SK-N-SH (cell line): ENCODE measurements at regions of chrX and their contacts with region 1.

Region 1: GRCh38 chrX:17046478-17047097 is 100.1 kb downstream of the REPS2 start:
- DNase-seq: peak; percentile 51
- H3K4me3 ChIP-seq: peak overlapping the region in 1 of 2 experiments; percentile 29; a peak in 1 of 4 replicates
- H3K27ac ChIP-seq: no peak overlapping the region
- H3K4me1 ChIP-seq: no peaks in the 10 kb centered on the region; a peak in 1 of 4 replicates
- H3K27me3 ChIP-seq: no peaks in the 10 kb centered on the region; the same call in 1 of the 2 replicates
- CTCF ChIP-seq: peak; percentile 90
- EP300 ChIP-seq: no peak
- RAD21 ChIP-seq: peak; percentile 86

Region 2: GRCh38 chrX:16100673-16101072 is 945.9 kb before region 1 on chrX:
- CTCF ChIA-PET with region 1: no interaction called
- POLR2A ChIA-PET with region 1: no interaction called
- DNase-seq: peak; percentile 31
- H3K4me3 ChIP-seq: no peak overlapping the region
- H3K27ac ChIP-seq: no peak overlapping the region
- H3K4me1 ChIP-seq: peaks cover 0 to 2% of the 10 kb centered on the region in 2 experiments; a peak in 1 of 4 replicates
- H3K27me3 ChIP-seq: no peaks in the 10 kb centered on the region; the same call in 1 of the 2 replicates
- CTCF ChIP-seq: no peak
- EP300 ChIP-seq: peak in 1 of 2 experiments; percentile 72; a peak in 2 of 4 replicates
- RAD21 ChIP-seq: peak; percentile 9; the same call in 1 of the 2 replicates

Region 3: GRCh38 chrX:16826207-16826606 is 220.4 kb before region 1 on chrX:
- CTCF ChIA-PET with region 1: interaction called, 74 read pairs
- POLR2A ChIA-PET with region 1: no interaction called
- DNase-seq: peak; percentile 44
- H3K4me3 ChIP-seq: no peak overlapping the region
- H3K27ac ChIP-seq: peak overlapping the region; percentile 75 to 81
- H3K4me1 ChIP-seq: peaks cover 11 to 23% of the 10 kb centered on the region in 2 experiments; a peak in 2 of 4 replicates
- H3K27me3 ChIP-seq: no peaks in the 10 kb centered on the region
- CTCF ChIP-seq: peak; percentile 77
- EP300 ChIP-seq: peak in 1 of 2 experiments; percentile 41; a peak in 2 of 4 replicates
- RAD21 ChIP-seq: peak; percentile 87

Region 4: GRCh38 chrX:17007206-17007683 is 39.3 kb before region 1 on chrX:
- CTCF ChIA-PET with region 1: interaction called, 12 read pairs
- POLR2A ChIA-PET with region 1: no interaction called
- DNase-seq: peak; percentile 36
- H3K4me3 ChIP-seq: no peak overlapping the region
- H3K27ac ChIP-seq: no peak overlapping the region
- H3K4me1 ChIP-seq: no peaks in the 10 kb centered on the region
- H3K27me3 ChIP-seq: no peaks in the 10 kb centered on the region; the same call in 1 of the 2 replicates
- CTCF ChIP-seq: peak; percentile 53
- EP300 ChIP-seq: no peak
- RAD21 ChIP-seq: peak; percentile 44

Region 5: GRCh38 chrX:17056868-17057608 is 10.4 kb after region 1 on chrX:
- CTCF ChIA-PET with region 1: interaction called, 13 read pairs
- POLR2A ChIA-PET with region 1: no interaction called
- DNase-seq: no peak
- H3K4me3 ChIP-seq: no peak overlapping the region
- H3K27ac ChIP-seq: no peak overlapping the region
- H3K4me1 ChIP-seq: no peaks in the 10 kb centered on the region
- H3K27me3 ChIP-seq: no peaks in the 10 kb centered on the region
- CTCF ChIP-seq: no peak
- EP300 ChIP-seq: no peak
- RAD21 ChIP-seq: no peak

Region 6: GRCh38 chrX:17072721-17073230 is 26.2 kb after region 1 on chrX:
- CTCF ChIA-PET with region 1: interaction called, 11 read pairs
- POLR2A ChIA-PET with region 1: no interaction called
- DNase-seq: no peak
- H3K4me3 ChIP-seq: no peak overlapping the region
- H3K27ac ChIP-seq: no peak overlapping the region
- H3K4me1 ChIP-seq: peaks cover 3 to 6% of the 10 kb centered on the region in 2 experiments; a peak in 2 of 4 replicates
- H3K27me3 ChIP-seq: no peaks in the 10 kb centered on the region; the same call in 1 of the 2 replicates
- CTCF ChIP-seq: no peak
- EP300 ChIP-seq: no peak
- RAD21 ChIP-seq: no peak

Region 7: DNA sequence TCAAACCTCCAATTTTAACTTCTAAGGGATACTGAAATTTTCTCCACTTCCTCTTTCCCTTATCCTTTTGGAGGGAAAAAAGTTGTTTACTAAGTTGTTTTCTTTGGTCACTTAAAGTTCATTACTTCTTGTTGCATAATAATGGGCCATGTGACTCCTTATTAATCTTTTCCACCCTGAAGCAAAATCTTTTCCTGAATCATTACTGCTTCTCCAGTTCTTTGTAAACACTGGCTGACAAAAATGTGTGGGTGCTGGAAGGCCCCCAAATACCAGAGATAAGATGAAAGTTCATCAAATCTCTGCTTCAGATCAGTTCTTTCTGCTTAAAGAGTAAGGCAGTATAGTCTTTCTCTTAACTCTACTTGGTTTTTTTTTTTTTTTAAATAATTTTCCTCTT is 219.5 kb after region 1 on chrX:
- CTCF ChIA-PET with region 1: no interaction called
- POLR2A ChIA-PET with region 1: no interaction called
- DNase-seq: no peak
- H3K4me3 ChIP-seq: no peak overlapping the region
- H3K27ac ChIP-seq: no peak overlapping the region
- H3K4me1 ChIP-seq: no peaks in the 10 kb centered on the region
- H3K27me3 ChIP-seq: no peaks in the 10 kb centered on the region
- CTCF ChIP-seq: no peak
- EP300 ChIP-seq: no peak
- RAD21 ChIP-seq: no peak

Region 8: DNA sequence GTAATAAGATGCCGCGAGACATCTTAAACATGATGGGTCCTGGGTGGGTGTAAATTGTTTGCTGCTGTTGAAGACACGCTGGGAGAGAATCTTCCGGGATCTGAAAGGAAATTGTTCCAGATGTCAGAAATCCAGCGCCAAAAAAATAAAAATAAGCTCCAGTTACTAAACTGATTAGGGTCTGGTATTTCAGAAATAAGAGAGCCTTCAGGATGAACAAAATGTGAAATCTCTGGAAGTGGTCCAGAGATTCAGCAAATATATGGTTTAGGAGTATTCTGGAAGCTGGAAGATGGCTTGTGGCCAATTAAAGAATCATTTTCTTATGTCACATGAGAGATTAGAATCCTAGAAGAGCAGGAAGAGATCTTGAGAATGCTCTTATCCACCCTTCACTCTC is 252.6 kb after region 1 on chrX:
- CTCF ChIA-PET with region 1: no interaction called
- POLR2A ChIA-PET with region 1: no interaction called
- DNase-seq: no peak
- H3K4me3 ChIP-seq: no peak overlapping the region
- H3K27ac ChIP-seq: no peak overlapping the region
- H3K4me1 ChIP-seq: no peaks in the 10 kb centered on the region
- H3K27me3 ChIP-seq: no peaks in the 10 kb centered on the region
- CTCF ChIP-seq: no peak
- EP300 ChIP-seq: no peak
- RAD21 ChIP-seq: no peak